A549 (cell line): ENCODE measurements at regions of chr7 and their contacts with region 1.

Region 1: DNA sequence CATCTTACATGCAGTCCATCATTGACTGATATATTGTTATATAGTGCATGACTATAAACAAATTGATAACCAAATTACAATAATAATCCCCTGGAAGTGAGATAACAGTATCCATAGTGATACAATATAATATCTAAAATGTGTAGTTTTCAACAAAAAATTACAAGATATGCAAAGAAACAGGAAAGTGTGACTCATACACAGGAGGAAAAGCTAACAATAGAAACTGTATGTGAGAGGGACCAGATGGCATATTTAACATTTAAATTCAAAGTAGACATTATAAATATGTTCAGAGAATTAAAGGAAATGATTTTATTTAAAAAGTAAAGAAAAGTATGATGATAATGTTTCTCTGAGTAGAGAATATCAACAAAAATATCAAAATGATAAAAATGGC is 8.0 kb downstream of the OR9A2 start:
- DNase-seq: no peak
- ATAC-seq: no peak
- H3K4me3 ChIP-seq: no peak overlapping the region
- H3K27ac ChIP-seq: no peak overlapping the region
- H3K4me1 ChIP-seq: peaks cover 9% of the 10 kb centered on the region; the same call in 2 of the 3 replicates
- CTCF ChIP-seq: no peak
- EP300 ChIP-seq: no peak
- POLR2A ChIP-seq: no peak
- RAD21 ChIP-seq: no peak

Region 2: DNA sequence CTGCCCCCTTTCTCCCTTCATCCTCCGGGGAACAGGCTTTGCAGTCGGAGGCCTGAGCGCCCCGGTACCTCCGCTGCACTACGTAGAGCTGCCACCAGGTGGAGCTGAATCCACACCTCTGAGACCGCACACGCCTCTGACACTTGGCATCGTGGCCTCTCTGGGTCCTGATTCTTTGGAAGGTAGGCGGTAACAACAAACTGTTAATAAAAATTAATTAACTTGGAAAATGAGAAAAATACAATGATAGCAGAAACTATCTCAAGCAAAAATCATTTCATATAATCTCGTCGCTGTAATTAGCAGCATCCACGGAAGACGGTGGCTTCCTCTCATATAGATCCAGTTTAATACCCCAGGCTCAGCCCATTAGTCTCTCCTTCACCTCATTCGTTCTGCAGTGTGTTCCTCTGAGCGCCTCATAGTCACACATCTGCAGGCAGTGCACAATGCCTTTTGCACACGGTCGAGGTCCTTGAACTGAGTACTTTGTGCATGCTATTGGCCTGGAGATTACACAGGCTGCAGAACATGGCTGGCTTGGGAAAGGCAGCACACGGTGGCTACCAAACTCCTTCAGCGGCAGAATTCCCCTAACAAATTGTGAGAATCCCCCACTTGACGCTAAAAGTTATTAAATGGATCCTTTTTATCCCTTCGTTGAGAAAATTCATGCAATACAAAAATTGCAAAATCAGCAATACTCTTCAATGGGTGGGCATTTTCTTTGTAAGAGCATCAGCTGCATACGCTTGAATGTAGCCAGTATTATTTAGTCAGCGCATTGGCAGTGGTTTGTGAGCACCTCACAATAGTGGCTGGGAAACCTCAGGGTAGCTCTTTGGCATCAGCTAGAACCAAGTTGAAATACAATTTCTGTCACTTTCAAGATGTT is 10.7 kb before region 1 on chr7:
- CTCF ChIA-PET with region 1: interaction called, 10 read pairs
- POLR2A ChIA-PET with region 1: no interaction called
- DNase-seq: peak; percentile 63 to 66
- ATAC-seq: peak; percentile 94 to 97
- H3K4me3 ChIP-seq: no peak overlapping the region
- H3K27ac ChIP-seq: no peak overlapping the region
- H3K4me1 ChIP-seq: no peaks in the 10 kb centered on the region
- CTCF ChIP-seq: peak; percentile 93
- EP300 ChIP-seq: no peak
- POLR2A ChIP-seq: no peak
- RAD21 ChIP-seq: peak; percentile 93 to 94

Region 3: DNA sequence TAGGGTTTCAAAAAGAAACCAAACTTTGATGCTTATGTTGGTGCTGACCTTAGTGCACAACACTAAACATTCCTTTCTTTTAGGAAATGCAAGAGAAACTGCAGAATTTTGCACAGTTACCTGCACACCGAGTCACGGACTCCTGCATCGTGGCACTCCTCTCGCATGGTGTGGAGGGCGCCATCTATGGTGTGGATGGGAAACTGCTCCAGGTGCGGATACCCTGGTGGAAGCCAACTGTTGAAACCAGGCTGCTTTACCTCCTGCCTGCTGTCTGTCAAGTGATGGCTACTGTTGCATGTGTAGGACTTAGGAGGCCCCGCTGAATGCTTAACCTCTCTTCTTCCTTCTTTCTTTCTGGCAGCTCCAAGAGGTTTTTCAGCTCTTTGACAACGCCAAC is 280.9 kb after region 1 on chr7:
- CTCF ChIA-PET with region 1: no interaction called
- POLR2A ChIA-PET with region 1: no interaction called
- DNase-seq: peak; percentile 47 to 58
- ATAC-seq: peak; percentile 88 to 92; a peak in 5 of 6 replicates
- H3K4me3 ChIP-seq: no peak overlapping the region
- H3K27ac ChIP-seq: no peak overlapping the region
- H3K4me1 ChIP-seq: peaks cover 14% of the 10 kb centered on the region
- CTCF ChIP-seq: peak; percentile 51
- EP300 ChIP-seq: no peak
- POLR2A ChIP-seq: no peak
- RAD21 ChIP-seq: peak in 1 of 2 experiments; percentile 25; a peak in 1 of 5 replicates